GM10248 (cell line): ENCODE measurements at regions of chr16 and their contacts with region 1.

Region 1: GRCh38 chr16:50665128-50665878 is 15.8 kb downstream of the SNX20 start:
- DNase-seq: peak; percentile 78
- CTCF ChIP-seq: peak; percentile 75

Region 2: GRCh38 chr16:50273681-50274325 is 391.5 kb before region 1 on chr16:
- CTCF ChIA-PET with region 1: interaction called, 13 read pairs
- POLR2A ChIA-PET with region 1: no interaction called
- DNase-seq: peak; percentile 88
- CTCF ChIP-seq: no peak

Region 3: DNA sequence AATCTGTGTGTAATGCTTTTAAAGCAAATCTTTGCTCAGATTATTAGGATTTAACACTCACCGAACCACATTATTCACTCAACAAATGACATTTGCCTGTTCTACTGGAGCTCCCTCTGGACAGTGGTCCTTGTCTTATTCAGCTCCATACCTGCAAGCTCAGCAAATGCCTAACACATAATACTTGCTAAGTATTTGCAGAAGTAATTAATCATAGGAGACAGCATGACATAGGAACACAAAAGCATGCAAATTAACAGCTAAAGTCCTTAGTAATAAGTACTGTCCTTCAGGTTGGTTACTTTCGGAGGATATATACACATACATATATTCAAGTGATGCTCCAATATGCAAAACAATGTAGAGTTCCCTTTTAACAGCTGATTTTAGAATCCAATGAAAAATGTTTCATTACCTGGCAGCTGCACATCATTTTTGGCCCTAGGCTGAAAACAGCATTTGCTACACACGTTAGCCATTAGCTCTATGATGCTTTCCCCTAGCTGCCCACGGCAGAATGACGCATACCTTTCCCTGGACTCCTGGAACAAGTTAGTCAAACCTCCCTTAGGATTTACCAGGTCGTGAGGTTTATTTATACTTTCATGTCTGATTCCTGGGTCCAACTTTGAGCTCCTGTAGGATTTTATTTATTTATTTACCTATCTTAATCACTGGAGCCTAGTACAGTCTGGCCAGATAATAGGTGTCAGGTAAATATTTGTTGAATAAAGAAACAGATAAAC is 305.1 kb before region 1 on chr16:
- CTCF ChIA-PET with region 1: interaction called, 13 read pairs
- POLR2A ChIA-PET with region 1: no interaction called
- DNase-seq: no peak
- CTCF ChIP-seq: no peak

Region 4: DNA sequence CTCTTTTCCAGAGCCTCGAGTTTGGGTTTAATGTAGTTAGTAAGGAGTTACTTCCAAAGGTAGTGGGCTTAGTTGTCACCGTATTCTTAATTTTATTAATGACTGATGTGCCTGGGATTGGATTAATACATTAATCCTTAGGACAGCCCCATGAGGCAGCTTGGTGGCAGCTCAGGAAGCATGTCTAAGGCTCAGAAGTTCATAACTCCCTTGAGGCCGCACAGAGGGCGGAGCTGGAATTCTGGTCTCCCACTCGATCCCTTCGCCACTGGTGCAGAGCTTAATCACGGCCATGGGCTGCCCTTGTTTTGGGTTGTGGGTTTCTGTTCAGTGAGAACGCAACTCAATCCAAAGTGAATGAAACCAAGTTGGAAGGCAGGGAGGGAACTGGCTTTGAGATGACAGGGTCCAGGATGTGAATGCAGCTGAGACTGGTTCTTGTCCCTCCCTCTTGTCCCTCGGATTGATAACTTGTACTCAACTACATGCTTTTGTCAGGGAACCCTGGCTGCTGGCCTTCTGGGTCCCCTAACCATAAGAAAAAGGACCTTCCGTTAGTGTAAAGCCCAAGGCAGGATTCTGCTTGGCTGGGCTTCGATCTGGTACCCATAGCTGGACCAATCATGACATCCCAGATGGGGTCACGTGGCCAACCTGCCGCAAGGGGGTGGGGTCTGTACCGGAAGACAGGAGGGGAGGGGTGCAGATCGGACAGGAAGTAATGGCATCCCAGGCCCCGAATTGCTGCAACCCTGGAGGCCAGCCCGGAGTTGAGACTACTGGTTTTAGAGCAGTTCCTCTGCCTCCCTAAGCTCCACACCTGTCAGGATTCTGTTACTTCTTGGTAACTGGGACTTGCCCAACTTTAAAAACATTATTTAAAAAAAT is 29.6 kb before region 1 on chr16:
- CTCF ChIA-PET with region 1: interaction called, 15 read pairs
- POLR2A ChIA-PET with region 1: no interaction called
- DNase-seq: no peak
- CTCF ChIP-seq: no peak

Region 5: DNA sequence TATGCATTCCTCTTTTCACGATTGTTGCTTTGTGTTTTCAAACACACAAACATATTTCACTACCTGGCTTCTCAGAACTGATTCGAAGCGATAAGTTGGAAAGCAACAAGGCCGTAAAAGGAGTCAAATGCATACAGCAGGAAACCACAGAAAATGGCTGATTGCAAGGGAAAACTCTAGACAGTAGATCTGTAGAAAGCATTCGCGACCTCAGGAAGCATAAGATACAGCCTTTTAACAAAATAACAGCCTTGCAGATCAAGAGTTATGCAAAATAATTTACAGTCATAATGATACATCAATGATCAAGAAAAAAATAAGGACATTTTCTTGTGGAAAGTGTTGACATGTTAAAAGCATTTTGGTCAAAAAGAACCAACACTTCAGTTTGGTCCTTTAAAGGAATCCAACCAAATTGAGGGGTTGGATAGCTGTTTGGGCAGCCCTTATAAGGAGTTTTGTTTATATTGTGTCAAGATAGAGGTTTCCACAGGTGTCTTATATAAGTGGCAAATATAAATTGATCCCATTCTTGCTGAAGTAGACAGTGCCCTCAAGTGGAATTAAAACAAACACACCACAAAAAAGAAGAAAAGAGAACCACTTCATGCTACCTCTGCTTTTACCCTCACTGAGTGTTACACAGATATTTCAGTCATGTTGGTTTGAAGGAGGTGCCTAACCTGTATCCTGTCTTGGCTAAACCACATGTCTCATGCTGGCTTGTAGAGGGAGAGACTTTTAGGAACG is 82.1 kb after region 1 on chr16:
- CTCF ChIA-PET with region 1: interaction called, 120 read pairs
- POLR2A ChIA-PET with region 1: no interaction called
- DNase-seq: peak; percentile 40
- CTCF ChIP-seq: peak; percentile 29